Uterus (tissue), 4 donors: ENCODE measurements at regions of chr12 and their contacts with region 1.

Region 1: DNA sequence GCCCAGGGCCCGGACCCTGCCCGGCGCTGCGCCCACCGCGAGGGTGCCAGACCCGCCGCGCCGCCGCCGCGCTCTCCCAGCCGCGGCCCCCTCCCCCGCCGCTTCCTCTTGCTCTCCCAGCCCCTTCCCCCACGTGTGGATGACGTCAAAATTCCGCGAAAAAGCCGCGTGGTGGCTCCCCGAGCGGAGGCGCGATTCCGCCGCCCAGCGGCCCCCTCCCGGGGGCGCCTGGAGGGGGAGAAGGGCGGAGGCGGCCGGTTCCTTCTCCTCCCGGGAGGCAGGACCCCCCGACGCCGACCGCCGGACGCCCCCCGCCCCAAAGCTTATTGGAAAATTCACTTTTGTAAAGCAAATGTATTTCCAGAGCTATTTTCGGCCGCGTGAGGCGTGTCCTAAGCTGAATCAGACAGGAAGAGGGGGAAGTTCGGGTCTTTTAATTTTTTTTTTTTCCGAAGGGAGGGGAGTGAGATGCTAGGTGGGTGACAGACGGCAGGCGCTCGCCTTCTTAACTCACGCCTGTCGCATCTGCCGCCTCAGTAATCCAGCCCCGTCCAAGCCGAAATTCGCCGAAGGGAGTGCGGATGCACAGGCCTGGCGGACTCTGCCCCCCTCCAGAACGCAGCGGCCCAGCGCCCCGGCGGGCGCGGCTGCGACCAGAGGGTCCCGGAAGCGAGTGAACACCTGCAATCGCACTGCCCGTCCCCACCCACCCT is 4.1 kb upstream of the CCND2 start:
- DNase-seq: peak; percentile 89 to 91
- H3K4me3 ChIP-seq: peak overlapping the region; percentile 47 to 91
- H3K27ac ChIP-seq: peak overlapping the region; percentile 88 to 99
- H3K4me1 ChIP-seq: no peaks in the 10 kb centered on the region
- H3K27me3 ChIP-seq: no peaks in the 10 kb centered on the region
- CTCF ChIP-seq: peak; percentile 25 to 51 (median 34)
- POLR2A ChIP-seq: peak; percentile 83 to 84

Region 2: DNA sequence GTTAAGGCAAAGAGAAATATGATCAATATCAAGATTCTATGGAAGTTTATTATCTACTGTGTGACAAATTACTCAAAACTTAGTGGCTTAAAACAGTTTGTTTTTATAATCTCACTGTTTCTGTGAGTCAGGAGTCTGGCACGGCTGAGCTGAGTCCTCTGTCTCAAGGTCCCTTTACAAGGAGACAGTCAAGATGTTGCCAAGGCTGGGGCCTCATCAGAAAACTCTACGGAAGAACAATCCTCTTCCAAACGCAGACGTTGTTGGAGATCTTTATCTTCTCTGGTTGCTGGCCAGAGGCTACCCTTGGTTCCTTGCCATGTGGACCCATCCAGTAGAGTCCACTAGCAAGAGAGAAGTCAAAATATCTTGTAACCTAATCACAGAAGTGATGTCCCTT is 96.4 kb before region 1 on chr12:
- intact Hi-C with region 1: no loop called
- DNase-seq: no peak
- H3K4me3 ChIP-seq: no peak overlapping the region
- H3K27ac ChIP-seq: no peak overlapping the region
- H3K4me1 ChIP-seq: no peaks in the 10 kb centered on the region
- H3K27me3 ChIP-seq: no peaks in the 10 kb centered on the region
- CTCF ChIP-seq: no peak
- POLR2A ChIP-seq: no peak

Region 3: GRCh38 chr12:4287325-4288211 is 18.1 kb after region 1 on chr12:
- intact Hi-C with region 1: loop called (anchors 2 kb)
- DNase-seq: no peak
- H3K4me3 ChIP-seq: no peak overlapping the region
- H3K27ac ChIP-seq: peak overlapping the region; percentile 21 to 25
- H3K4me1 ChIP-seq: peaks cover 0 to 13% of the 10 kb centered on the region in 2 donors
- H3K27me3 ChIP-seq: no peaks in the 10 kb centered on the region
- CTCF ChIP-seq: no peak
- POLR2A ChIP-seq: no peak